ENCODE measurements at regions of chr5 and their contacts with region 1.

Region 1: GRCh38 chr5:149049371-149049781 is 13.5 kb downstream of the SH3TC2 start:
- DNase-seq: no peak
- H3K4me3 ChIP-seq: no peak overlapping the region
- H3K4me3 Mint-ChIP-seq: no peak overlapping the region
- H3K27ac ChIP-seq: no peak overlapping the region
- H3K27ac Mint-ChIP-seq: no peak overlapping the region
- H3K4me1 ChIP-seq: peaks cover 5 to 13% of the 10 kb centered on the region in 2 donors
- H3K4me1 Mint-ChIP-seq: peaks cover 13% of the 10 kb centered on the region
- H3K27me3 ChIP-seq: no peaks in the 10 kb centered on the region
- H3K27me3 Mint-ChIP-seq: peaks cover 0 to 3% (median 0%) of the 10 kb centered on the region in 3 donors
- CTCF ChIP-seq: no peak

Region 2: GRCh38 chr5:147804334-147804733 is 1245.0 kb before region 1 on chr5:
- intact Hi-C with region 1: loop called in 1 of 2 experiments (anchors 5 kb)
- DNase-seq: no peak
- H3K4me3 ChIP-seq: peak overlapping the region in 1 of 3 experiments; percentile 35
- H3K4me3 Mint-ChIP-seq: no peak overlapping the region
- H3K27ac ChIP-seq: peak overlapping the region in 1 of 2 donors; percentile 86
- H3K27ac Mint-ChIP-seq: peak overlapping the region; percentile 79 to 95 (median 85)
- H3K4me1 ChIP-seq: peaks cover 27 to 31% of the 10 kb centered on the region in 2 donors
- H3K4me1 Mint-ChIP-seq: peaks cover 32% of the 10 kb centered on the region
- H3K27me3 ChIP-seq: peaks cover 0 to 2% of the 10 kb centered on the region in 2 donors
- H3K27me3 Mint-ChIP-seq: peaks cover 0 to 2% (median 0%) of the 10 kb centered on the region in 3 donors
- CTCF ChIP-seq: no peak

Region 3: GRCh38 chr5:148949841-148950470 is 99.4 kb before region 1 on chr5:
- intact Hi-C with region 1: no loop called
- DNase-seq: no peak
- H3K4me3 ChIP-seq: no peak overlapping the region
- H3K4me3 Mint-ChIP-seq: no peak overlapping the region
- H3K27ac ChIP-seq: no peak overlapping the region
- H3K27ac Mint-ChIP-seq: no peak overlapping the region
- H3K4me1 ChIP-seq: peaks cover 8 to 11% of the 10 kb centered on the region in 2 donors
- H3K4me1 Mint-ChIP-seq: peaks cover 15% of the 10 kb centered on the region
- H3K27me3 ChIP-seq: no peaks in the 10 kb centered on the region
- H3K27me3 Mint-ChIP-seq: peaks cover 0 to 2% (median 0%) of the 10 kb centered on the region in 3 donors
- CTCF ChIP-seq: no peak

Region 4: DNA sequence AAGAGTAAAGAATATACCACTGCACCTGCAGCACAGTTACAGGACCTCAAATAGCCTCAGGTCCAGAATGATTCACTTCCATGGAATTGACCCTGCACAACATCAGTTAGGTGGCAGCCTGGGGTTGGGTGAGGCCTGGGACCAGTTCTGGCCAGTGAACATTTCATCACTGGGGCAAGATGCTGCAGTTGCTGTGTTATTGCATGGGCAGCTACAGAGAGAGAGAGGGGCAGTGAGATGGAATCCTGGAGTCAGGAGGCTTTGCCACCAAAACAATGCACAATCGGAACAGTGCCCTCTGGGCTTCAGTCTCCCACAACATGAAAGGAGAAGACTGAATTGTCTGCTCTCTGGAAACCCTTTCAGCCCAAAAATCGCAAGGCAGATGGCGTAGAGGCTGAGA is 38.3 kb before region 1 on chr5:
- intact Hi-C with region 1: no loop called
- DNase-seq: no peak
- H3K4me3 ChIP-seq: no peak overlapping the region
- H3K4me3 Mint-ChIP-seq: no peak overlapping the region
- H3K27ac ChIP-seq: no peak overlapping the region
- H3K27ac Mint-ChIP-seq: peak overlapping the region in 1 of 7 donors; percentile 55
- H3K4me1 ChIP-seq: no peaks in the 10 kb centered on the region
- H3K4me1 Mint-ChIP-seq: no peaks in the 10 kb centered on the region
- H3K27me3 ChIP-seq: no peaks in the 10 kb centered on the region
- H3K27me3 Mint-ChIP-seq: no peaks in the 10 kb centered on the region
- CTCF ChIP-seq: no peak

Region 5: GRCh38 chr5:149422366-149423048 is 373.1 kb after region 1 on chr5:
- intact Hi-C with region 1: no loop called
- DNase-seq: no peak
- H3K4me3 ChIP-seq: no peak overlapping the region
- H3K4me3 Mint-ChIP-seq: no peak overlapping the region
- H3K27ac ChIP-seq: no peak overlapping the region
- H3K27ac Mint-ChIP-seq: no peak overlapping the region
- H3K4me1 ChIP-seq: peaks cover 10 to 11% of the 10 kb centered on the region in 2 donors
- H3K4me1 Mint-ChIP-seq: peaks cover 27% of the 10 kb centered on the region
- H3K27me3 ChIP-seq: no peaks in the 10 kb centered on the region
- H3K27me3 Mint-ChIP-seq: peaks cover 2 to 4% (median 2%) of the 10 kb centered on the region in 3 donors
- CTCF ChIP-seq: no peak

Region 6: DNA sequence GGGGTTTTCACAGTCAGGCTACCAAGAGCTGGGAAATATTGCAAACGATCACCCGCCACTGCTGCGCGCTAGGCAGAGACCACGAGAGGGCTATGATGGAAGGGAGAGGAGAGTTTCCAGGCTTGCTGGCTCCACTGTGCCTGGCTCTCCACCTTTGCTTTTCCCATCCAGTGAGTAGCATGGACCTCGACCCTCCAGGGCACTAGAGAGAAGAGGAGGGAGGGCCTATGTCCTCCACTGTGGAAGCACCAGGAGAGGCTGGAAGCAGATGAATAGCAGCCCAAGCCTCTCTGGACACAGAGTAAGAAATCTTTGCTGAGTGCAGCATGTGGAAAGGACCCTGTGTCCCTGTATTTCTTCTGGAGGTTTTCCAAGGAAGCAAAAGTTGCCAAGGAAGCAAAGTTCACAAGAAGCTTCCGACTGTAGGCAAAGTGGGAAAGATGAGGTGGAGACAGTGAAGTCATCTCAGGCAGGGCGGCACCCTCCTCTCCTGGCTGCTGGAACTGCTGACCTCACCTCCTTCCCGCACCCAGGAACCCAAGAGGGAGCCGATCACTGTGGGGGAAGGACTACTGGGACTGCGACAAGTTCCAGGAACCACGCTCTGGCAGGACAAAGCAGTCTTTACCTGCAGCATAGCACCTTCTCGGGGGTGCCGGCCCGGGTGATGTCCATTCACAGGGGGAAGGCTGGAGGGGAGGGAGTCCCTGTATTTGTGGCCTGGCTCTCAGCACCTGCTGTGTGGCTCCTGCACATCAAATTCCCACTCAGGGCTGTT is 422.2 kb after region 1 on chr5:
- intact Hi-C with region 1: no loop called
- DNase-seq: no peak
- H3K4me3 ChIP-seq: no peak overlapping the region
- H3K4me3 Mint-ChIP-seq: no peak overlapping the region
- H3K27ac ChIP-seq: no peak overlapping the region
- H3K27ac Mint-ChIP-seq: no peak overlapping the region
- H3K4me1 ChIP-seq: no peaks in the 10 kb centered on the region
- H3K4me1 Mint-ChIP-seq: no peaks in the 10 kb centered on the region
- H3K27me3 ChIP-seq: no peaks in the 10 kb centered on the region
- H3K27me3 Mint-ChIP-seq: peaks cover 2 to 13% (median 2%) of the 10 kb centered on the region in 3 donors
- CTCF ChIP-seq: no peak

Measured in CD14-positive monocyte (primary cell).